ENCODE measurements at regions of chr4 and their contacts with region 1.

Region 1: GRCh38 chr4:74675673-74676279 is 118.5 kb downstream of the BTC start:
- DNase-seq: peak in 4 of 5 donors; percentile 13 to 73 (median 44)
- H3K4me3 ChIP-seq: no peak overlapping the region
- H3K27ac ChIP-seq: no peak overlapping the region
- H3K4me1 ChIP-seq: no peaks in the 10 kb centered on the region
- H3K27me3 ChIP-seq: no peaks in the 10 kb centered on the region
- CTCF ChIP-seq: peak; percentile 71

Region 2: GRCh38 chr4:74364652-74365491 is 310.9 kb before region 1 on chr4 and contains the start of gene EREG:
- intact Hi-C with region 1: loop called (anchors 10 kb)
- DNase-seq: peak; percentile 41 to 78 (median 55)
- H3K4me3 ChIP-seq: peak within 1 kb of the TSS in 1 of 3 donors; percentile 22
- H3K27ac ChIP-seq: no peak within 1 kb of the TSS
- H3K4me1 ChIP-seq: no peaks in the 10 kb centered on the region
- H3K27me3 ChIP-seq: no peaks in the 10 kb centered on the region
- CTCF ChIP-seq: no peak
- total RNA-seq, gene EREG: 0.44 TPM

Measured in kidney (tissue), 22 donors.